ENCODE measurements at regions of chr2 and their contacts with region 1.

Region 1: DNA sequence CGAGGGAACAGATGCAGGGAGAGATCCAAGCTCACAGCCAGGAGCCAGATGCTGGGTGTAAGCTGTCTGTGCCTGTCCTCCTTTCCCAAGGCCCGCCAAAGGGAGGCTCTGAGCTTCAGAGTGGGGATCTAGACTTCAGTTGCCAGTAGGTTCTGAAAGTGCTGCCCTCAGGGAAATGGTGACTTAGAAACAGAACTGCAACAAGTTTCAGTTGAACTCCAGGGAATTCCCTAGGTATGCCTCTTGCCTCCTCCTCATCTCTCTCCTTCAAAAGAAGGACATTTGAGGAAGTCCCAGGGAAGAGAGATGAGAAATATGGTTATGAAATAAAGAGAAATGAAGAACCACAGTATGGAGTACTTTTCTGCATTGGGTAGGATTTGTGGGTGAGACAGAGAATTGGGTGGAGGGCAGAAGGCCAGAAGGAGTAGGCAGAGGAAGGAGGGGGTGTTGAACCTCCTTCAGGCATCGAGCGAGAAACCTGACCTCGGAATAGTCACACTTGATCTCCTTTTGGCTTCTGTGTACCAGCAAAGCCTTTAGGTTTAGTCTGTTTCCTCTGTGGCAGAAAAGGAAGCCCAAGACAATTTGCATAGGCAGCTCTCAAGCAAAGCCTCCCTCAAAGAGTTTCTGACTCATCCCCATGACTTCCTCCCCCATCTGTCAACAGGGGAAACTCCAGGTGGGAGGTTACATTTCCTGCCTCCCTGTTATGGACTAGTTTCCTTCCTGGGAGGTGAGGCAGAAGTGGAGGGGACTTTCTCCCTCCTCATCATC is 45.7 kb downstream of the QPCT start:
- DNase-seq: no peak
- H3K4me3 ChIP-seq: no peak overlapping the region; the same call in 1 of the 2 replicates
- H3K27ac ChIP-seq: peak overlapping the region; percentile 85
- H3K27me3 ChIP-seq: no peaks in the 10 kb centered on the region
- CTCF ChIP-seq: no peak

Region 2: GRCh38 chr2:37375741-37376288 is 14.4 kb before region 1 on chr2:
- CTCF ChIA-PET with region 1: interaction called, 12 read pairs
- POLR2A ChIA-PET with region 1: interaction called, 6 read pairs
- DNase-seq: no peak
- H3K4me3 ChIP-seq: no peak overlapping the region
- H3K27ac ChIP-seq: no peak overlapping the region
- H3K27me3 ChIP-seq: no peaks in the 10 kb centered on the region
- CTCF ChIP-seq: no peak

Region 3: GRCh38 chr2:37405781-37406180 is 15.6 kb after region 1 on chr2:
- CTCF ChIA-PET with region 1: interaction called, 23 read pairs
- POLR2A ChIA-PET with region 1: no interaction called
- DNase-seq: no peak
- H3K4me3 ChIP-seq: no peak overlapping the region
- H3K27ac ChIP-seq: no peak overlapping the region
- H3K27me3 ChIP-seq: no peaks in the 10 kb centered on the region
- CTCF ChIP-seq: no peak

Region 4: DNA sequence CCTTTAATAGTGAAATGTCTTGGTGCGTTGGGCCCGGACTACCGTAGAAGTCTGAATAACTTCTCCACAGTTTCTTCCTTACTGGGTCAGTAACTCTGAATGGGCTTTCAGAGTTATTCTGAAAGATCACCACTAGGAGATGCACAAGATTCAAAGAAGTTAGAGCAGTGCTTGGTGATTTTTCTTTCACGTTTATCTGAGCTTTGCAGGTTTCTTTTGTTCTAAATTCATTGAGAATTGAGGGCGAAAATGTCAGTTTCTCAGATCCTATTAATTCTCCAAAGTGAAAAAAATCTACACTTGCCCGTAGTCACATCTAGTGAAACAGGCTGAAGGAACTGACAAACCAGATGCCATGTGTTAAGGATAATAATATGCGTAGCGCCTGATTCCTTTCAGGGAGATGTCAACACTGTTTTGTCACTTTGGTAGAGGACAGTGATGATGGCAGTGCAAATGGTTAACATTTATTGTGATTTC is 24.3 kb after region 1 on chr2:
- CTCF ChIA-PET with region 1: interaction called, 48 read pairs
- POLR2A ChIA-PET with region 1: interaction called, 4 read pairs
- DNase-seq: peak; percentile 56
- H3K4me3 ChIP-seq: no peak overlapping the region
- H3K27ac ChIP-seq: no peak overlapping the region
- H3K27me3 ChIP-seq: no peaks in the 10 kb centered on the region
- CTCF ChIP-seq: peak; percentile 94

Region 5: GRCh38 chr2:37832590-37833197 is 442.5 kb after region 1 on chr2:
- CTCF ChIA-PET with region 1: interaction called, 54 read pairs
- POLR2A ChIA-PET with region 1: no interaction called
- DNase-seq: peak; percentile 64
- H3K4me3 ChIP-seq: no peak overlapping the region
- H3K27ac ChIP-seq: no peak overlapping the region
- H3K27me3 ChIP-seq: no peaks in the 10 kb centered on the region
- CTCF ChIP-seq: peak; percentile 85

Region 6: DNA sequence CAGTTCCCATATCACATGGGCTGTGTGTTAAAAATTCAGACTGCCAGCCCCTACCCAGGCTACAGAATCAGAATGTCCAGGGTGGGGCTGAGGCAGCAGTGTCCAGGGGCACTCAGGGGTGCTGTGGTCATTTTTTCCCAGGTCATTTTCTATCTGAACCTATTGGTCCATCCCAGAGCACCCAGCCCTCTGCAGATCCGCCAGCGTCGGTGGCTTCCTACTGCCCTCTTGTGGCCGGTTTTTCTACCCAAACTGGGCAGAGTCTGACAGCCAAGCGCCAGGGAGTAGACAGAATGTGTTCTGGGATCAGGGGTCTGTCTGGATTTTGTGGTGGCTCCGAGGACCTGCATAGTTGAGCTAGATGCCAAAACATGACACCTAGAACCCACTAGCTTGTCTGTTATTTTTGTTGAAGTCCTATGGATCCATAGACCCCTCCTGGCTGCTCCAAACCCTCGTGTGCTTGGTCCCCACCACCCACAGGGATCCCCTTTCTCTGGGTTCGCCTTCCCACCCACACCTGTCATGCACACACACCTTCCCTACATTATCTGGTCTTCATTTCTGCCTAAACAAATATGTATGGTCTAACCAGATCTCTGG is 500.8 kb after region 1 on chr2:
- CTCF ChIA-PET with region 1: interaction called, 36 read pairs
- POLR2A ChIA-PET with region 1: no interaction called
- DNase-seq: no peak
- H3K4me3 ChIP-seq: no peak overlapping the region
- H3K27ac ChIP-seq: no peak overlapping the region
- H3K27me3 ChIP-seq: peaks cover under 1% of the 10 kb centered on the region
- CTCF ChIP-seq: peak; percentile 91